ENCODE measurements at regions of chr4 and their contacts with region 1.

Region 1: DNA sequence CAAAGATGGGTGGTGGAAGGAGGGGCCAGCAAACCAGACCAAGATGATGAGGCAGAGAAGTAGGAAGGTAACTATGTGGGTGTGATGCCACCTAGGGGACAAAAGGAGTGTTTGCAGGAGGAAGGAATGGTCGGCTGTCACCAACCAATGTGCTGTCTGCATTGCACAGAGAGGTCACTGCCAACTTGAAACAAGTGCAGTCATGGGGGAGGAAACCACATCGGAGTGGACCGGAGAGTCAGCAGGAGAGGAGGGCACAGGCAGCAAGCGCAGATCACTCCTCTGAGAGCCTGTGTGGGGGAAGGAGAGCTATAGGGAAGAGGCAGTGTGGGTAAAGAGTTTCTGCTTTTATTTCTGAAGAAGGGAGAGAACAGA is 38.5 kb upstream of the FGFBP2 start:
- H3K4me3 Mint-ChIP-seq: no peak overlapping the region
- H3K27ac Mint-ChIP-seq: no peak overlapping the region
- H3K4me1 Mint-ChIP-seq: no peaks in the 10 kb centered on the region
- H3K27me3 Mint-ChIP-seq: no peaks in the 10 kb centered on the region

Region 2: DNA sequence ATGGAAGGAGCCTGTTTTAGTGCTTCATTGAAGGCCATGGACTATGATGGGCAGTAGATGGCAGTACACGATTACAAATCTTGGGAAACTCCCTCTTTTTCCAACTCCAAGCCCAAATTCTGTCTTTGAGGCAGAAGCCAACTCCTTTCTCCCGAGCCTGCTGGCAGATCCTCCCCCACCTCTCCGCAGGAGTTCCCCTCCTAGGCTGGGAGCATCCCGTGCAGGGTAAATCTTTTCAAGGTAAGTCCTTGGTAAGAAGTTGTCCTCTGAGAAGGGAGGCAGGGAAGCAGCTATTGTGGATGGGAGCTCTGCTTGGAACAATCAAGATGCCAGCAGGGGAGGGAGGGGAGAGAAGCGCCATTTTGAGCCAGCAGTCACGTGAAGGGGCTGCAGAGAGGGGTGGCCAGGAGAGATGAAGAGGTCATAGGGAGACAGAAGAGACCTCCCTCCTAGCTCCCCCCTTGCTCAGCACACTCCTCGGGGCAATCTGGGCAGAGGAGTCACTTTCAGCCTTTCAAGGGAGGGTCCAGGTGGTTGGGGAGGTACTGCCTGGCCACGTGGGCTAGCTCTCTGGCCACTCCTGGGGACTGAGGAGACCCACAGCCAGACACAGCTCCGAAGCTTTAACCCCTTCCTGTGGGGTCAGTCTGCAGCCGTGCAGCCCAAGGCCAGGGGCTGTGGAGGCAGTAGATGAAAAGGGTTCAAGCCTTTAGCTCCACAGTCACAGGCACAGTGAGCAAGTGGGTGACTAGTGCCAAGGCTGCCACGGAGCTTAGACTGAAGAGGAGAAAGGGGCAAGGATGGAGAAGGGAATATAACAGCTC is 522.2 kb before region 1 on chr4:
- intact Hi-C with region 1: loop called (anchors 2 kb)
- H3K4me3 Mint-ChIP-seq: no peak overlapping the region
- H3K27ac Mint-ChIP-seq: no peak overlapping the region
- H3K4me1 Mint-ChIP-seq: peaks cover 3% of the 10 kb centered on the region
- H3K27me3 Mint-ChIP-seq: no peaks in the 10 kb centered on the region

Region 3: DNA sequence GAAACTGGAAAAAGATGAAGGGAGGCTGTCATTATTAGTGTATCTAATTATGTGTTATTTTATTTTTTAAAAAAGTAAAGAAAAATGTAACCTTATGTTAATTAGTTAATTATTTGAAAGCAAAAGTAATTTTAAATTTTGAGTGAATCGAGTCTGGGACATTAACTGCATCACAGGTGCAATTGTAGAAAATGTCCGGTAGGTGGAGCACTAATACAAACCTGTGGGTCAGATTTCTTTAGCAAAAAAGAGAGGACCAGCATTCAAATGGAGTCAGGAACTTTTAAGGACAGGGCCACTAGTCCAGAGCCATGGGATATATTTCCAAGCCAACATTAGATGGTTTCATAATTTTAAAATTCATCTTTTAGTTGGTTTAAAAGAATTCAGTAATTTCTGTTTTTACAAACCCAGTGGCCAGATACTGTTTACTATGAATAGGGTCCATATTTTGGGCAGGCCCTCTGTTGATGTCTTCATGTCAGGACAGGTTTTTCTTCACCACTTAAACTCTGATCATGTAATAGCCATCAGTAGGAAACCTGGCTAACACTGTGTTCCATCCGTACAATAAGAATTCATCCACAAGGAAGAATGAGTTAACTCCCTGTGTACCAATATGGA is 271.4 kb before region 1 on chr4:
- intact Hi-C with region 1: loop called (anchors 2 kb)
- H3K4me3 Mint-ChIP-seq: no peak overlapping the region
- H3K27ac Mint-ChIP-seq: no peak overlapping the region
- H3K4me1 Mint-ChIP-seq: peaks cover 5% of the 10 kb centered on the region
- H3K27me3 Mint-ChIP-seq: no peaks in the 10 kb centered on the region

Region 4: GRCh38 chr4:15805583-15806517 is 195.6 kb before region 1 on chr4:
- intact Hi-C with region 1: loop called (anchors 1 kb)
- H3K4me3 Mint-ChIP-seq: no peak overlapping the region
- H3K27ac Mint-ChIP-seq: peak overlapping the region; percentile 43
- H3K4me1 Mint-ChIP-seq: peaks cover 48% of the 10 kb centered on the region
- H3K27me3 Mint-ChIP-seq: no peaks in the 10 kb centered on the region

Region 5: GRCh38 chr4:15964159-15964558 is 37.3 kb before region 1 on chr4:
- intact Hi-C with region 1: loop called (anchors 2 kb)
- H3K4me3 Mint-ChIP-seq: no peak overlapping the region
- H3K27ac Mint-ChIP-seq: no peak overlapping the region
- H3K4me1 Mint-ChIP-seq: peaks cover 26% of the 10 kb centered on the region
- H3K27me3 Mint-ChIP-seq: peaks cover 1% of the 10 kb centered on the region